CD14-positive monocyte (primary cell): ENCODE measurements at regions of chr17 and their contacts with region 1.

Region 1: GRCh38 chr17:41665566-41666236 is 23.0 kb upstream of the EIF1 start:
- DNase-seq: peak; percentile 72 to 83 (median 80)
- H3K4me3 ChIP-seq: peak overlapping the region; percentile 18 to 73 (median 45)
- H3K4me3 Mint-ChIP-seq: peak overlapping the region; percentile 81 to 93
- H3K27ac ChIP-seq: peak overlapping the region; percentile 34 to 47
- H3K27ac Mint-ChIP-seq: peak overlapping the region; percentile 68 to 93 (median 87)
- H3K4me1 ChIP-seq: peaks cover 33 to 36% of the 10 kb centered on the region in 2 donors
- H3K4me1 Mint-ChIP-seq: peaks cover 32% of the 10 kb centered on the region
- H3K27me3 ChIP-seq: no peaks in the 10 kb centered on the region
- H3K27me3 Mint-ChIP-seq: peaks cover 16 to 18% (median 17%) of the 10 kb centered on the region in 3 donors
- CTCF ChIP-seq: peak; percentile 95

Region 2: DNA sequence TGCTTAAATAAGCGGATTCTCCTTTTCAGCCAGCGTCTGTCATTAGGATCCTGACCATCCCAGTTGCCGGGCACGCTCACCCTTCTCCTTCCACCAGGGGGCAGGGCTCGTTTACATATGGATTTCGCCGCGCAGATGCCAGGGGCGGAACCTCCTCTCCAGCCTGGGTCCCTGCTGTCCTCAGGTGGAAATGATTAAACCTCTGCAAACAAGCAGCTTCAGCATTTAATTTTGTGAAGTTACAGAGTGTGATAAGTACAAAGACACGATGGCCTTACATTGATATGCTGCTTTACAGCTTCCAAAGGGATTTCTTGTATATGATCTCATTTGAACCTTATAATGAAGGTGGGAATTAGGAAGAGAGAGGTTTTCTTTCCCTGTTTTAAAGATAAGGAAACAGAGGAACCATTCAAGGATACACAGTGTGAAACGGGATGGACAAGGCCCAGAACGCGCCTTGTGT is 862.1 kb before region 1 on chr17:
- intact Hi-C with region 1: loop called in 1 of 2 experiments (anchors 2 kb)
- DNase-seq: peak; percentile 51 to 66 (median 59)
- H3K4me3 ChIP-seq: no peak overlapping the region
- H3K4me3 Mint-ChIP-seq: no peak overlapping the region
- H3K27ac ChIP-seq: no peak overlapping the region
- H3K27ac Mint-ChIP-seq: no peak overlapping the region
- H3K4me1 ChIP-seq: no peaks in the 10 kb centered on the region
- H3K4me1 Mint-ChIP-seq: no peaks in the 10 kb centered on the region
- H3K27me3 ChIP-seq: peaks cover 35 to 42% of the 10 kb centered on the region in 2 donors
- H3K27me3 Mint-ChIP-seq: peaks cover 29 to 38% (median 33%) of the 10 kb centered on the region in 3 donors
- CTCF ChIP-seq: peak; percentile 89

Region 3: GRCh38 chr17:40818733-40819527 is 846.8 kb before region 1 on chr17:
- intact Hi-C with region 1: loop called in 1 of 2 experiments (anchors 5 kb)
- DNase-seq: peak; percentile 67 to 90 (median 72)
- H3K4me3 ChIP-seq: peak overlapping the region; percentile 77 to 99 (median 85)
- H3K4me3 Mint-ChIP-seq: peak overlapping the region; percentile 82 to 92
- H3K27ac ChIP-seq: peak overlapping the region; percentile 42 to 48
- H3K27ac Mint-ChIP-seq: peak overlapping the region; percentile 41 to 84 (median 79)
- H3K4me1 ChIP-seq: peaks cover 8 to 14% of the 10 kb centered on the region in 2 donors
- H3K4me1 Mint-ChIP-seq: peaks cover 12% of the 10 kb centered on the region
- H3K27me3 ChIP-seq: peaks cover 10 to 34% of the 10 kb centered on the region in 2 donors
- H3K27me3 Mint-ChIP-seq: peaks cover 24 to 38% (median 29%) of the 10 kb centered on the region in 3 donors
- CTCF ChIP-seq: no peak

Region 4: GRCh38 chr17:40909351-40909750 is 756.4 kb before region 1 on chr17:
- intact Hi-C with region 1: loop called (anchors 5 to 10 kb)
- DNase-seq: peak; percentile 87 to 94 (median 93)
- H3K4me3 ChIP-seq: no peak overlapping the region
- H3K4me3 Mint-ChIP-seq: no peak overlapping the region
- H3K27ac ChIP-seq: peak overlapping the region in 1 of 2 donors; percentile 28
- H3K27ac Mint-ChIP-seq: peak overlapping the region in 2 of 7 donors; percentile 26 to 81
- H3K4me1 ChIP-seq: peaks cover 42 to 44% of the 10 kb centered on the region in 2 donors
- H3K4me1 Mint-ChIP-seq: peaks cover 35% of the 10 kb centered on the region
- H3K27me3 ChIP-seq: peaks cover 4 to 9% of the 10 kb centered on the region in 2 donors
- H3K27me3 Mint-ChIP-seq: peaks cover 14 to 23% (median 17%) of the 10 kb centered on the region in 3 donors
- CTCF ChIP-seq: peak; percentile 93

Region 5: GRCh38 chr17:41496820-41497408 is 168.8 kb before region 1 on chr17:
- intact Hi-C with region 1: loop called in 1 of 2 experiments (anchors 10 kb)
- DNase-seq: peak; percentile 90 to 93 (median 91)
- H3K4me3 ChIP-seq: peak overlapping the region in 1 of 3 experiments; percentile 58
- H3K4me3 Mint-ChIP-seq: peak overlapping the region; percentile 59 to 60
- H3K27ac ChIP-seq: peak overlapping the region; percentile 93 to 97
- H3K27ac Mint-ChIP-seq: peak overlapping the region; percentile 91 to 98 (median 96)
- H3K4me1 ChIP-seq: peaks cover 61 to 68% of the 10 kb centered on the region in 2 donors
- H3K4me1 Mint-ChIP-seq: peaks cover 71% of the 10 kb centered on the region
- H3K27me3 ChIP-seq: no peaks in the 10 kb centered on the region
- H3K27me3 Mint-ChIP-seq: peaks cover 2 to 7% (median 5%) of the 10 kb centered on the region in 3 donors
- CTCF ChIP-seq: peak; percentile 91

Region 6: DNA sequence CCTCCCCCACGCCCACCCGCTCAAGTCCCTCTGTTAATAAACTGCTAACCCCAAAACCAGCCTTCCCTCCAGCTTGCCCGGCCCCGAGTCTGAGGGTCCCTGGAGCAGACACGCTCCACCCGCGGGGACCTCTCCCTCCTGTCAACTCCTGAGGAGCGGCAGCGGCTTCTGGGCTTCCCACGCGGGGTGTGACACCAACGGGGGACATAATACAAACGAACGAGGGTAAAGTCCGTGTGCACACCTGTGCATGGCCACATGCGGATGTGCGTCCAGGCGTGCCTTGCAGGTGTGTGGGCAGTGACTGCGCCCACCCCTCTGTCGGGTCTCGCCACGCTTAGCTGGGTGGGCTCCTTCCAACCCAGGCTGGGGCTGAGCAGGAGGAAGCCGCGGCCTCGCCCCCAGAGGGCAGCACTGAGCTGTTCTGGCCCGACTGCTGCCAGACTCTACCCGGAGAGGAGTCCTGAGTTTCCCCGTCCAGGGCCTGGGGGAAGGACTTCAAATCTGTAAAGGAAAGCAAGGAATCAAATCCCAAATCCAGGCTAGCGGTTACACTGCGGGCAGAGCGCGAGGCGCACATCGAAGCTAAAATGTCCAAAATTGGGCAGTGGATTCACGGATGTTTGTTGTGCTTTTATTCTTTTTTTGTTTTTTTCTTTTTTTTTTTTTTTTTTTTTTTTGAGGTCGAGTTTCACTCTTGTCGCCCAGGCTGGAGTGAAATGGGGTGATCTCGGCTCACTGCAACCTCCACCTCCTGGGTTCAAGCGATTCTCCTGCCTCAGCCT is 17.1 kb before region 1 on chr17:
- intact Hi-C with region 1: loop called in 1 of 2 experiments (anchors 1 kb)
- DNase-seq: peak; percentile 71 to 81 (median 80)
- H3K4me3 ChIP-seq: peak overlapping the region in 2 of 3 experiments; percentile 15 to 75
- H3K4me3 Mint-ChIP-seq: peak overlapping the region; percentile 72 to 82
- H3K27ac ChIP-seq: no peak overlapping the region
- H3K27ac Mint-ChIP-seq: peak overlapping the region in 3 of 7 donors; percentile 79 to 87 (median 82)
- H3K4me1 ChIP-seq: peaks cover 32 to 36% of the 10 kb centered on the region in 2 donors
- H3K4me1 Mint-ChIP-seq: peaks cover 26% of the 10 kb centered on the region
- H3K27me3 ChIP-seq: no peaks in the 10 kb centered on the region
- H3K27me3 Mint-ChIP-seq: peaks cover 2 to 7% (median 6%) of the 10 kb centered on the region in 3 donors
- CTCF ChIP-seq: peak; percentile 85

Region 7: DNA sequence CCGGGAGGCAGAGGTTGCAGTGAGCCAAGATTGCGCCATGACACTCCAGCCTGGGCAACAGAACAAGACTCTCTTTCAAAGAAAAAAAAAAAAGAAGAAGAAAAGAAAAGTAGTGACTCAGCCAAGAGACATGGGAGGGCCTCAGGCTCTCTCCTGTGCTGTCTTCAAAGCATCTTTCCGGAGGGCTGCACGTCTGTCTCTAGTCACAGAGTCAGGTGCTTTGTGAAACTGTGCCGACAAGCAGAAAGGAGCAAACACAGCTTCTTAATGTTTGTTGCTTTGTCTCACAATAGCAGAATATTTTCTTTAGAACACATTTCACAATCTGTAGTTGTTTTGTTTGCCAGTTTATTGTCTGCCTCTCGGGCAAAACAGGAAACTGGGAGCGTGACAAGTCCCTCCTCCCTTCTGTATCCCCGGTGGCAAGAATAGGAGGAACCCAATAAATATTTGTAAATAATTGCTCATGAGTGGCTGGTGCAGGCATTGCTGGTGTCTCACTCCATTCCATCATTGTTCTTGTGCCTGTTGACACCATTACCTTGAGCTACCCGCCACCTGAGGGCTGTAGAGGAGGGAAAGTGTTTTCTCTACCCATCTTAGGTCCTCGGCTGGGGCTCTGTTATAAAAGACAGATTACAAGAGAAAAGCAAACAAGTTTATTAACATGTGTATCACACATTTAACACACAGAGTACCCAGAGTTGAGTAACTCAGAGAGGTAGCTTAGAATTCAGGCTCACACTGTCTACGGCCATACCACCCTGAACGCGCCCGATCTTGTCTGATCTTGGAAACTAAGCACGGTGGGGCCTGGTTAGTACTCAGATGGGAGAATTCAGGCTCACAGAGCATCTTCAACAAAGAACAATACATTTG is 51.9 kb after region 1 on chr17:
- intact Hi-C with region 1: no loop called
- DNase-seq: peak; percentile 47 to 71 (median 60)
- H3K4me3 ChIP-seq: no peak overlapping the region
- H3K4me3 Mint-ChIP-seq: peak overlapping the region in 1 of 2 donors; percentile 35
- H3K27ac ChIP-seq: peak overlapping the region; percentile 32 to 58
- H3K27ac Mint-ChIP-seq: peak overlapping the region in 6 of 7 donors; percentile 43 to 76 (median 63)
- H3K4me1 ChIP-seq: peaks cover 12 to 14% of the 10 kb centered on the region in 2 donors
- H3K4me1 Mint-ChIP-seq: peaks cover 13% of the 10 kb centered on the region
- H3K27me3 ChIP-seq: no peaks in the 10 kb centered on the region
- H3K27me3 Mint-ChIP-seq: peaks cover 0 to 3% (median 2%) of the 10 kb centered on the region in 3 donors
- CTCF ChIP-seq: no peak